ENCODE measurements at regions of chr6 and their contacts with region 1.

Region 1: GRCh38 chr6:85126485-85127167 is 323.3 kb upstream of the NT5E start:
- DNase-seq: peak; percentile 32
- H3K4me3 ChIP-seq: no peak overlapping the region
- H3K27ac ChIP-seq: no peak overlapping the region
- H3K4me1 ChIP-seq: no peaks in the 10 kb centered on the region
- H3K27me3 ChIP-seq: peaks cover 2% of the 10 kb centered on the region
- CTCF ChIP-seq: peak; percentile 64 to 81

Region 2: GRCh38 chr6:84422380-84422968 is 704.2 kb before region 1 on chr6:
- CTCF ChIA-PET with region 1: no interaction called
- dilution Hi-C with region 1: no loop called
- in situ Hi-C with region 1: no loop called
- intact Hi-C with region 1: loop called (anchors 1 kb)
- DNase-seq: peak; percentile 21
- H3K4me3 ChIP-seq: no peak overlapping the region
- H3K27ac ChIP-seq: no peak overlapping the region
- H3K4me1 ChIP-seq: no peaks in the 10 kb centered on the region
- H3K27me3 ChIP-seq: peaks cover 20% of the 10 kb centered on the region
- CTCF ChIP-seq: peak; percentile 88 to 96

Region 3: GRCh38 chr6:84728598-84728997 is 398.0 kb before region 1 on chr6:
- CTCF ChIA-PET with region 1: no interaction called
- dilution Hi-C with region 1: no loop called
- in situ Hi-C with region 1: no loop called
- intact Hi-C with region 1: loop called (anchors 2 kb)
- DNase-seq: peak; percentile 45
- H3K4me3 ChIP-seq: no peak overlapping the region
- H3K27ac ChIP-seq: no peak overlapping the region
- H3K4me1 ChIP-seq: peaks cover 7% of the 10 kb centered on the region
- H3K27me3 ChIP-seq: peaks cover 3% of the 10 kb centered on the region
- CTCF ChIP-seq: peak; percentile 55 to 74

Region 4: DNA sequence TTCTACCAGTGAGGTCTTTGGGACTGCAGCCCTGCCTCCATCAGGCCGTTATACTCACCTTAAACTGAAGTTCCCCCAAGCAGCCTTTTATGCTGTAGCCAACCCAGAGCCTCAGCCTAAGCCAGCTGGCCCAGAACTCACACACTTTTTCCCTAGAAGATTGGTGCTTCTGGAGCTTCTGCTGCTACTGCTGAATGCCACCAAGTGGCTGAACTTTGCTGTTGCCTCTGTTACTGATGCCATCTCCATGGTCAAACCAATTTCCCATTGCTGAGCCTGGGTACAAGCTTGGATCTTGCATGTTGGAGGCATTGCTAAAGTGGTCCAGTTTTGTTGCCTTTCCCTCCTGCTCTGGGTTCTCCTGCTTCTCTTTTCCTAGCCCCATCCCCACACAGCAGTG is 347.2 kb before region 1 on chr6:
- CTCF ChIA-PET with region 1: no interaction called
- dilution Hi-C with region 1: no loop called
- in situ Hi-C with region 1: no loop called
- intact Hi-C with region 1: loop called (anchors 5 kb)
- DNase-seq: no peak
- H3K4me3 ChIP-seq: no peak overlapping the region
- H3K27ac ChIP-seq: no peak overlapping the region
- H3K4me1 ChIP-seq: peaks cover 3% of the 10 kb centered on the region
- H3K27me3 ChIP-seq: peaks cover 26% of the 10 kb centered on the region
- CTCF ChIP-seq: peak in 1 of 2 donors; percentile 26

Region 5: DNA sequence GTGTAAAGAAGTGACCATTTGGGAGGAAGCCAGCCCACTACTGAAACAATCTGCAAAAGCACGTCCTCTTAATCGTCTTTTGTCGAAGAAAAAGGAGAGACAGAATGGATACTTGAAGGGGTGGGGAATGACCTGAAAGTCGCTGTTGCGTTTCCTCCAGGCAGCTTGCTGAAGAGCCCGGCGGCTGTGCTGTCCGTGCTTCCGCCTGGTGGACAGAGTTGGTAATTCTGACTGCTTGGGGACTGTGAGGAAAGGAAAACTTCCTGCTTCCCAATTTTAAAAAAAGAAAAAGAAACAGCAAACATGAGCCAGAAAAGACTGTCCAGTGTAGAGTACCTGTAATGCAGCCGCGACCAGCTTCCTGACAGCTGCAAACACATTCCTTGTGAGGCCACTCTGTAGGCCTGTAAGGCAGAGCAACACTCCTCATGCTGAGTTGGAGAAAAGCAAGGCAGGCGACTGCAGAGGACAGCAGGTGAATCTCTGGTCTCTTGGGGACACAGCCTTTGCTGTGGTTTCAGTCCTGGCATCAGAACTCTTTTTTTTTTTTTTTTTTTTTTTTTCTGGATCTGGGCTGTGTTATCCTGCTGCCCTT is 111.1 kb before region 1 on chr6:
- CTCF ChIA-PET with region 1: no interaction called
- dilution Hi-C with region 1: no loop called
- in situ Hi-C with region 1: no loop called
- intact Hi-C with region 1: loop called (anchors 1 kb)
- DNase-seq: no peak
- H3K4me3 ChIP-seq: no peak overlapping the region
- H3K27ac ChIP-seq: no peak overlapping the region
- H3K4me1 ChIP-seq: no peaks in the 10 kb centered on the region
- H3K27me3 ChIP-seq: peaks cover 2% of the 10 kb centered on the region
- CTCF ChIP-seq: peak; percentile 68 to 80

Region 6: DNA sequence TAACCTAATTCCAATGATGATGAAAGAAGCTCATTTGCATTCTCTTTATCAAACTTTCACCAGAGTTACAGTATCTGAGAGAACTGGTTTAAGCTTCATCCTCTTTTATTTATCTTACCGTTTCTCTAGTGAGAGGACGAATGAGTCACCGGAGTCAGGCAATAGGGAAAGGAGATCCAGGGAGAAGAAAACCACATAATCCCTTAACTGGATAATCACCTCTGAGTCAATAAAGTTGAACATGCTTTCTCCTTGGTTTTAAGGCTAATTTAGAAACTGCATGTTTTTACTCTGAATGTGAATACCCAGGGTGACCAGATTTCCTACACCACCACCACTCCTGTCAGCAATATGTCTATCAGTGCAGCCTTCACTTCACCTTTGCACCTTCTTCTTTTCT is 48.6 kb before region 1 on chr6:
- CTCF ChIA-PET with region 1: no interaction called
- dilution Hi-C with region 1: no loop called
- in situ Hi-C with region 1: no loop called
- intact Hi-C with region 1: loop called (anchors 5 kb)
- DNase-seq: peak; percentile 91
- H3K4me3 ChIP-seq: no peak overlapping the region
- H3K27ac ChIP-seq: no peak overlapping the region
- H3K4me1 ChIP-seq: peaks cover 13% of the 10 kb centered on the region
- H3K27me3 ChIP-seq: no peaks in the 10 kb centered on the region
- CTCF ChIP-seq: no peak